GM12878 (cell line): ENCODE measurements at regions of chr17 and their contacts with region 1.

Region 1: GRCh38 chr17:21304091-21304490 is 19.6 kb downstream of the MAP2K3 start:
- DNase-seq: no peak
- ATAC-seq: no peak
- H3K4me3 ChIP-seq: no peak overlapping the region
- H3K27ac ChIP-seq: no peak overlapping the region
- H3K4me1 ChIP-seq: no peaks in the 10 kb centered on the region
- H3K27me3 ChIP-seq: no peaks in the 10 kb centered on the region
- CTCF ChIP-seq: no peak
- EP300 ChIP-seq: no peak
- POLR2A ChIP-seq: no peak
- RAD21 ChIP-seq: no peak

Region 2: GRCh38 chr17:21772321-21772720 is 468.2 kb after region 1 on chr17:
- CTCF ChIA-PET with region 1: no interaction called
- POLR2A ChIA-PET with region 1: no interaction called
- RAD21 ChIA-PET with region 1: no interaction called
- SMC1A ChIA-PET with region 1: no interaction called
- in situ Hi-C with region 1: loop called (anchors 25 kb)
- intact Hi-C with region 1: no loop called
- DNase-seq: no peak
- ATAC-seq: no peak
- H3K4me3 ChIP-seq: no peak overlapping the region
- H3K27ac ChIP-seq: no peak overlapping the region
- H3K4me1 ChIP-seq: no peaks in the 10 kb centered on the region
- H3K27me3 ChIP-seq: no peaks in the 10 kb centered on the region
- CTCF ChIP-seq: no peak
- EP300 ChIP-seq: no peak
- POLR2A ChIP-seq: no peak
- RAD21 ChIP-seq: no peak

Region 3: GRCh38 chr17:22492331-22492730 is 1188.2 kb after region 1 on chr17:
- CTCF ChIA-PET with region 1: no interaction called
- POLR2A ChIA-PET with region 1: no interaction called
- RAD21 ChIA-PET with region 1: no interaction called
- SMC1A ChIA-PET with region 1: no interaction called
- in situ Hi-C with region 1: loop called (anchors 25 kb)
- intact Hi-C with region 1: no loop called
- DNase-seq: no peak
- ATAC-seq: no peak
- H3K4me3 ChIP-seq: no peak overlapping the region
- H3K27ac ChIP-seq: no peak overlapping the region
- H3K4me1 ChIP-seq: no peaks in the 10 kb centered on the region
- H3K27me3 ChIP-seq: no peaks in the 10 kb centered on the region
- CTCF ChIP-seq: no peak
- EP300 ChIP-seq: no peak
- POLR2A ChIP-seq: no peak
- RAD21 ChIP-seq: no peak